AG04449 (cell line): ENCODE measurements at regions of chr9 and their contacts with region 1.

Region 1: DNA sequence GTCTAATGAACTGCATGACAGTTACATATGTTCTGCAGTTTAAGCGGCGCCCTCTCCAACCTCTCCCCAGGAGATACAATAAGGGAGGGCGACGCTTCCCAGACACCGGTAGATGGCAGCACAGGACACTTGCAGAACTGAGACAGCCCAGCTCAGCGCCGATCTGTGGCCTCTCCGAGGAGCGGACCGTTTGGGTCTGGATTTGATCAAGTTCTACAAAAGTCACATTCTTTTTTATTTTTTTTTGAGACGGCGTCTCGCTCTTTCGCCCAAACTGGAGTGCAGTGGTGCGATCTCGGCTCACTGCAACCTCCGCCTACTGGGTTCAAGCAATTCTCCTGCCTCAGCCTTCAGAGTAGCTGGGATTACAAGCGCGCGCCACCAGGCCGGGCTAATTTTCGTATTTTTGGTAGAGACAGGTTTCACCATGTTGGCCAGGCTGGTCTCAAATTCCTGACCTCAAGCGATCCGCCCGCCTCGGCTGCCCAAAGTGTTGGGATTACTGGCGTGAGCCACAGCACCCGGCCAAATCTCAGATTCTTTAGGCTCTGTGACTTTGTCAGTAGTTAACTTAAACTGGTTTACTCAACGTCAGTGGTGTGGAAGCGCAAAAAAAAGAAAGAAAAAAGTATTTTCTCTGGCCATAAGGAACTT is 1.4 kb upstream of the ATOSB start:
- DNase-seq: peak; percentile 63
- H3K4me3 ChIP-seq: peak overlapping the region; percentile 99
- CTCF ChIP-seq: peak; percentile 98

Region 2: GRCh38 chr9:35102926-35103659 is 13.9 kb before region 1 on chr9 and contains the start of gene STOML2:
- CTCF ChIA-PET with region 1: interaction called, 162 read pairs
- POLR2A ChIA-PET with region 1: interaction called, 13 read pairs
- DNase-seq: peak; percentile 73
- H3K4me3 ChIP-seq: peak within 1 kb of the TSS; percentile 65
- CTCF ChIP-seq: no peak

Region 3: GRCh38 chr9:35161713-35162604 is 44.9 kb after region 1 on chr9 and contains the start of gene UNC13B:
- CTCF ChIA-PET with region 1: interaction called, 12 read pairs
- POLR2A ChIA-PET with region 1: interaction called, 3 read pairs
- DNase-seq: no peak
- H3K4me3 ChIP-seq: peak within 1 kb of the TSS; percentile 90
- CTCF ChIP-seq: no peak

Region 4: DNA sequence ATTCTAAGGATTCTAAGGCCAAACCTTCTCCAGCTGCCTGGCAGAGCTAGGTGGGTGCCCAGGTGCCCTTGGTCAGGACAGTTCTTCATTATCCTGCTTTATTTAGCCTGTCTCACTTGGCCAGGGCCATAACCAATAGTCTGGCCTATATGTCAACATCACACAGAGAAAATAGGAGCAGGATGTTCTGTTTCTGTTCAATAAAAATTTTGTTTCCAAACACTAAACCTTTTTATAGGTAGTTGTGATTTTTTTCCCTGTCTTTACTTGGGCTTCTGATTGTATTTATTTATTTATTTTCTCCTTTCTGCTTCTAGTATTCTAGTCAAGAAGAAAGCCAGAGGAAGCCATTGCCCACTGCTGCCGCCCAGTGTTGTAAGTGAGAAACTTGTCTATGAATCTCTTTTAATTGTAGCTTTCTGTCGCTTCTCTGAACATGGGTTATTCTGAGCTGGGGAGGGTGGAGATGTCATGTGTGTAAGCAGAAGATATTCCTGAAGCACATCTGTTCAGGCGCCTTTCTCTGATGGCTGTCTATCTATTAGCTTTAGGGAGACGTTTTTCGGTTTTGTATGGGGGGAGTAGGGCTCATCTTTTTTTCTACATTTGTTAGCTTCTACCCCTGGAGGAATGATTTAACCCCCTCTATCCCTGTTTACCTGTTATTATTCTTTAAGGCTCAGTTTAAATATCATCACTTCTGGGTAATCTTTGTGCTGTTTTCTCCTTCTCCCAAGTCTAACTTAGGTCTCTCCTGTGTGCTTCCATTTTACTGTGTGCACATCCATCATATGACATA is 141.8 kb after region 1 on chr9:
- CTCF ChIA-PET with region 1: interaction called, 49 read pairs
- POLR2A ChIA-PET with region 1: no interaction called
- DNase-seq: peak; percentile 12
- H3K4me3 ChIP-seq: no peak overlapping the region
- CTCF ChIP-seq: peak; percentile 58

Region 5: GRCh38 chr9:35385042-35385441 is 268.0 kb after region 1 on chr9:
- CTCF ChIA-PET with region 1: interaction called, 52 read pairs
- POLR2A ChIA-PET with region 1: no interaction called
- DNase-seq: peak; percentile 34
- H3K4me3 ChIP-seq: no peak overlapping the region
- CTCF ChIP-seq: peak; percentile 57

Region 6: DNA sequence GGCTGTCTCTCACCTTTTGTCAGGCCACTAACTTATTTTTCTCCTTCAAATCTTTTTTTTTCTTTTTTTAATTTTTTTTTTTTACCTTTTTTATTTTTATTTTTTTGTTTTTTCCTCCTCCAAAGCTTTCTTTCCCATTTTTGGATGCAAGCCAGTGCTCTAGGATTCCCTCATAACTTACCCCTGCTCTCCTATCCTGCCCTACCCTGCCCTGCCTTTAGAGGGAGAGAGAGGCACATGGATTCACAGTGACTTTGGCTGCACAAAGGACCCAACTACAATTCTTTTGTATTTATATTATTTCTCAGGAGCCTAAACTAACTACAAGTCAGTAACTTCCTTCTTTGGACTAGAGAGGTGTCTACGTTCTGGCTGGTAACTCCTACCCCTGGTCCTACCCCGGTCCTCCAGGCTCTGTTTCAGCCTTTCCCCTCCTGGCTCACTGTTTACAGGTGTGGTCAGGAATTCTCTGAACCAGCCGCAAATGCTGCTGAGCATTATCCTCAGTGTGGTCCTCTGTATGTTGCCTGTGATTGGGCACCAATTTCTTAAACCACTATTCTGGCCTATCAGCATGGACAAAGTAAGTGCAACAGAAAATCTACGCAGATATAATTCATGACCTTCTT is 364.4 kb after region 1 on chr9:
- CTCF ChIA-PET with region 1: interaction called, 181 read pairs
- POLR2A ChIA-PET with region 1: interaction called, 3 read pairs
- DNase-seq: no peak
- H3K4me3 ChIP-seq: no peak overlapping the region
- CTCF ChIP-seq: peak; percentile 74